ENCODE measurements at regions of chr1 and their contacts with region 1.

Region 1: DNA sequence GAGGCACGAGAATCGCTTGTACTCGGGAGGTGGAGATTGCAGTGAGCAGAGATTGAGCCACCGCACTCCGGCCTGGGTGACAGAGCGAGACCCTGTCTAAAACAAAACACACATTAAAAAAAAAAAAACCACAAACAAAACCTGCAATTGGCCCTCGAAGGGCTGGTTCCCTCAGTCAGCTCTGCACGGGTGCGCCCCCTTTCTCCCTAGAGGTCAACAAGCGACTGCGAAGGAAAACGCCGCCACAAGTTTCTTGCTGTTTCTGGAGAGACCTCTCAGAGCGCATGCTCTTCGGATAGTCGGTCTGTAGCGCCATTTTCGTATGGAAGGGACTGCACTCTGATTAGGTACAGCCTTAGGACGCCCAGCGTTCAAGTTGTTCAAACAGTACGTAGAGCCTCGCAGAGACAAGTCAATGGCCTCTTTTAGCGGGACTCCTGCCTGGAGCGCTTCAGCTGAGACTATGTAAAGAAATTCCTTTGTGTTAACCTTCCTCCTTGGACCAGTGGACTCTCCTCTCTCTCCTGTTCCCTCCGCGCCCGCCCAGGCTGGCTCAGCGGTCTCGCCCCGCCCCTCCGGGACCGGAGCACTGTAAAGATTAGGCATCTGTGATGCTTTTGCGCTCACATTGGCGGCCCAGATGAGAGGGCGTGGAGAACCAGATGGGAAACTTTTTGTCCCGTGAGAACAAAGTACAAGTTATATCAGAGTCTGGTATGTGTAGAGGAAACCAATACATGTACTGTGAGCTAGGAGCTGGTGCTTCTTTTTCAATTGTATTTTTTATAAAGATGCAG is 1.0 kb upstream of the CDC14A start:
- DNase-seq: peak; percentile 92
- H3K4me3 Mint-ChIP-seq: peak overlapping the region; percentile 94
- H3K27ac Mint-ChIP-seq: peak overlapping the region; percentile 97
- H3K4me1 Mint-ChIP-seq: peaks cover 29% of the 10 kb centered on the region
- H3K27me3 Mint-ChIP-seq: no peaks in the 10 kb centered on the region

Region 2: DNA sequence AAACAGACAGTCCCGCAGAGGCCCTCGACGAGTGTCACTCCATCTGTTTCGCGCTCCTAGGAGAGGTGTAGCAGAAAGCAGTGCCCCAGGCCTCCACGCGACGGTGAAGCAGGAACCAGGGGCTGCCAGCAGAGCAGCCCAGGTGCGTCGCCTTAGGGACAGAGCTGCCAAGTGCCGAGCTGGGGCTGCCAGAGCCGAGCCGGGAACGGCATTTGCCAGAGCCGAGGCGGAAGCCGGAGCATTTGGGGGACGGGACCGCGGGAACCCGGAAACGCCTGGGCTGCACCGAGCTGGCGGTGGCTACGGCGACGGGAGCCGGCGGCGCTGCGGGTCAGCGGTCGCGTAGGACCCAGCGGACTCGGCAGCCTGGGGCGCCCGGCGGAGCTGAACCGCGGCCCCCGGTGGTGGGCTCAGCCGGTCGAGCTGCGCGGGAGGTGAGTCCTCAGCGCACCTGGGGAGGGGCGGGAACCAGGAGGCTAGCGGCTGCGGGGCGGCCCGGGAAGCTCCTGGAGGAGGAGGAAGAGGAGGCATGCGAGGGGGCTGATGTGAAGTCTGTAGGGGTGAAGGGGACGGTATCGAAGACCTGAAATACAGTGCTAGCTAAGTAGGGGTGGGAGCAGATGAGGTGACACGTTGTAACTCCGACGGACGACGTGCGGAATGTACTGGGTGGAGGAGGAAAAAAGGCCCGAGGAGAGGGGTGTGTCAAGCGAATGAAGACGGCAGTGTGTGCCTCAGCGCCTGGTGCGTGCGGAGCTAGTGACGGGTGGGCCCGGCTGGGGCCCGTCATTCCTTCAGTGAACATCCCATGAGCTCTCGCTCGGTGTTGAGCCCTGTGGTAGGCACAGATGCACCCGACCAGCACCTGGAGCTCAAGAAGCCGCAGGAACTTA is 381.3 kb before region 1 on chr1 and contains the start of gene SLC35A3:
- CTCF ChIA-PET with region 1: no interaction called
- intact Hi-C with region 1: loop called (anchors 1 kb)
- DNase-seq: peak; percentile 85
- H3K4me3 Mint-ChIP-seq: peak within 1 kb of the TSS; percentile 96
- H3K27ac Mint-ChIP-seq: peak within 1 kb of the TSS; percentile 85
- H3K4me1 Mint-ChIP-seq: peaks cover 22% of the 10 kb centered on the region
- H3K27me3 Mint-ChIP-seq: no peaks in the 10 kb centered on the region
- total RNA-seq, gene SLC35A3: 13.8 to 15.5 TPM

Region 3: DNA sequence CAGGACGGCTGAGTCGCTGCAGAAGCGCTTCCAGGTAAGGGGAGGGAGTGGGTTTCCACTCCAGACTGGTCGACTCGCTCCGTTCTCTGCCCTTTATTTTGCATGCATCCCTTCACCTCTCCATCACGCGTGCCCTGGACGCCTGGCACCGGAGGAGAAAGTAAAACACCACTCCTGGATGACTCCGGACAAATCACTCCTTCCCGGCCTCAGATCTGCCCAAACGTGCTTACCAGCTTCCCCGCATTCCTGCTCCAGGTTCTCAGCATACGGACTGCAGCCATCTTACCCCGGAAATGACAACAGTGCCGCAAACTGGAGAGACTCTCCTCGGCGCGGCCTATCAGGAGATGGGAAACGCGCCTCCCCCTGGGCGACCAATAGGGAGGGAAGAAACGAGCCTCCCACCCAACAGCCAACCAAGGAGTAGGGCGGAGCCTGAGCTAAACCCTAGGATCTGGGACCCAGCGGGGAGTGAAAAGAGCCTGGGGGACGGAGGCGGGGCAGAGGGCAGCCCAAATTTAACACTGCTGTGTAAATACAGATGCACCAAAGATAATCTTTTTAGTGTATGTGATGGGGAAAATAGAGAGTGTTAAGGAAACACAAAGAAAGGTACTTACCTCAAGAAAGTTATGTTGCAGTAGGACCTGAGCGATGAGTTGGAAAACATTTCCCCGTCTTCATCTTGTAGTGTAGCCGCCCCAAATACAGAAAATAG is 101.6 kb before region 1 on chr1 and contains the start of gene DBT:
- CTCF ChIA-PET with region 1: no interaction called
- intact Hi-C with region 1: loop called (anchors 1 kb)
- DNase-seq: peak; percentile 97
- H3K4me3 Mint-ChIP-seq: no peak within 1 kb of the TSS
- H3K27ac Mint-ChIP-seq: no peak within 1 kb of the TSS
- H3K4me1 Mint-ChIP-seq: peaks cover 18% of the 10 kb centered on the region
- H3K27me3 Mint-ChIP-seq: no peaks in the 10 kb centered on the region
- total RNA-seq, gene DBT: 12.3 to 12.5 TPM

Region 4: DNA sequence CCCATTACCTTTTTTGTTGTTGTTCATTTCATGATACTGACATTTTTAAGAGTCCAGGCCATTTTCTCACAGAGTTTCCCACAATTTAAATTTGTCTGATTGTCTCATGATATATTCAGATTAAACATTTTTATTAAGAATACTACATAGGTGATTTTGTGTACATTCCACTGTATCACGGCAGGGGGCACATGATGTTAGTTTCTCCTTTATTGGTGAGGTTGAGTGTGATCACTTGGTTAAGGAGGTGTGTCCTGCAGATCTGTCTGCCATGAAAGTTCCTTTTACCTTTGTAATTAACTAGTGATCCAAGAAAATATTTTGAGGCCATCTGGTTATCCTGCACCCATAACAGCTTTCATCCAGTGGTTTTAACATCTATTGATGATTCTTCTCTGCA is 73.4 kb before region 1 on chr1:
- CTCF ChIA-PET with region 1: no interaction called
- intact Hi-C with region 1: no loop called
- DNase-seq: peak; percentile 40
- H3K4me3 Mint-ChIP-seq: no peak overlapping the region
- H3K27ac Mint-ChIP-seq: no peak overlapping the region
- H3K4me1 Mint-ChIP-seq: peaks cover 12% of the 10 kb centered on the region
- H3K27me3 Mint-ChIP-seq: no peaks in the 10 kb centered on the region

Region 5: GRCh38 chr1:100328133-100328532 is 23.2 kb before region 1 on chr1:
- CTCF ChIA-PET with region 1: no interaction called
- intact Hi-C with region 1: loop called (anchors 2 kb)
- DNase-seq: no peak
- H3K4me3 Mint-ChIP-seq: no peak overlapping the region
- H3K27ac Mint-ChIP-seq: no peak overlapping the region
- H3K4me1 Mint-ChIP-seq: peaks cover 4% of the 10 kb centered on the region
- H3K27me3 Mint-ChIP-seq: no peaks in the 10 kb centered on the region

Region 6: DNA sequence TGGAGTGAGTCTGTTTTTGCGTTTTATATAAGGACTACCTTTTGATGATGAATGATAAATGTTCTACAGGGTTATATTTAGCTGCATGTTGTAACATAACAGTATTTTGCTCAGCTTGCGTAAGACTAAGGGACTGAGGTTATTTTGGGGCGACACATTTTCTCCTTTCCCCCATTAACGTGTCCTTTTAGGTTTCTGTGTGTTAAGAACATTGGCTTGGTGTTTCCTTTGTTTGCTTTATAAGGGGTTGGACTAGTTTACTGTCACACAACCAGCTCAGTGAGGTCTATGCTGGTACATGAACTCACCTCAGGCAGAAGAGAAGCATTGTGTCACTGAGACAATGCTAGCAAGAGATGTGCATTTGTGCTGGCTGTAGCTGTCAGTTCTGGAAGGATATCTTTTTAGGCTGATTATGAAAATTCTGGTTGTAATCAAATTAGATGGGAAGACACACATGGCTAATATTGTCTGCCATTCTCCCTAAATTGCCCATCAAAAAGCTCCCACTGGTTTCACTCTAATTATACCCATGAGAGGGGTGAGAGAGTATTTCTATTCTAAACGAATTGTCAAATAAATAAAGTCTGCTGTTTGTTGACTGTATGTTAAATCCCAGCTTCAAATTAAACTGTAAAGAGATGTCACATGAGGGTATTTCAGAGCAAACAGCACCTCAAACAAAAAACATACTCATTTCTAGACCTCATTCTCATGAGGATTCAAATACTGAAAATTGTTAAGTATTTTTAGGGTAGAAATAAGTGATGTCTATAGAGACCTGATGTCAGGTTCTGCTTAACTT is 63.6 kb after region 1 on chr1:
- CTCF ChIA-PET with region 1: interaction called, 7 read pairs
- intact Hi-C with region 1: loop called (anchors 1 kb)
- DNase-seq: no peak
- H3K4me3 Mint-ChIP-seq: peak overlapping the region; percentile 3
- H3K27ac Mint-ChIP-seq: peak overlapping the region; percentile 67
- H3K4me1 Mint-ChIP-seq: peaks cover 73% of the 10 kb centered on the region
- H3K27me3 Mint-ChIP-seq: no peaks in the 10 kb centered on the region

Region 7: GRCh38 chr1:100543640-100544039 is 192.3 kb after region 1 on chr1:
- CTCF ChIA-PET with region 1: no interaction called
- intact Hi-C with region 1: loop called (anchors 5 kb)
- DNase-seq: peak; percentile 75
- H3K4me3 Mint-ChIP-seq: no peak overlapping the region
- H3K27ac Mint-ChIP-seq: no peak overlapping the region
- H3K4me1 Mint-ChIP-seq: peaks cover 2% of the 10 kb centered on the region
- H3K27me3 Mint-ChIP-seq: peaks cover 23% of the 10 kb centered on the region